IMR-90 (cell line): ENCODE measurements at regions of chr7 and their contacts with region 1.

Region 1: GRCh38 chr7:66542528-66543269 is 86.0 kb upstream of the KCTD7 start:
- DNase-seq: peak; percentile 48
- ATAC-seq: peak; percentile 77
- H3K4me3 ChIP-seq: no peak overlapping the region
- H3K27ac ChIP-seq: peak overlapping the region; percentile 6
- H3K4me1 ChIP-seq: peaks cover 4% of the 10 kb centered on the region; the same call in 1 of the 2 replicates
- H3K27me3 ChIP-seq: no peaks in the 10 kb centered on the region
- CTCF ChIP-seq: no peak
- POLR2A ChIP-seq: no peak
- RAD21 ChIP-seq: no peak

Region 2: GRCh38 chr7:64581926-64582894 is 1960.5 kb before region 1 on chr7:
- CTCF ChIA-PET with region 1: no interaction called
- POLR2A ChIA-PET with region 1: no interaction called
- dilution Hi-C with region 1: no loop called
- in situ Hi-C with region 1: no loop called
- intact Hi-C with region 1: no loop called
- DNase-seq: peak; percentile 58
- ATAC-seq: peak; percentile 54
- H3K4me3 ChIP-seq: no peak overlapping the region
- H3K27ac ChIP-seq: no peak overlapping the region
- H3K4me1 ChIP-seq: no peaks in the 10 kb centered on the region
- H3K27me3 ChIP-seq: no peaks in the 10 kb centered on the region
- CTCF ChIP-seq: no peak
- POLR2A ChIP-seq: no peak
- RAD21 ChIP-seq: no peak

Region 3: GRCh38 chr7:66099616-66100474 is 442.9 kb before region 1 on chr7:
- CTCF ChIA-PET with region 1: no interaction called
- POLR2A ChIA-PET with region 1: no interaction called
- dilution Hi-C with region 1: no loop called
- in situ Hi-C with region 1: no loop called
- intact Hi-C with region 1: no loop called
- DNase-seq: peak; percentile 89
- ATAC-seq: peak; percentile 94
- H3K4me3 ChIP-seq: peak overlapping the region; percentile 43
- H3K27ac ChIP-seq: peak overlapping the region; percentile 79
- H3K4me1 ChIP-seq: peaks cover 6% of the 10 kb centered on the region
- H3K27me3 ChIP-seq: no peaks in the 10 kb centered on the region
- CTCF ChIP-seq: no peak
- POLR2A ChIP-seq: no peak
- RAD21 ChIP-seq: no peak

Region 4: DNA sequence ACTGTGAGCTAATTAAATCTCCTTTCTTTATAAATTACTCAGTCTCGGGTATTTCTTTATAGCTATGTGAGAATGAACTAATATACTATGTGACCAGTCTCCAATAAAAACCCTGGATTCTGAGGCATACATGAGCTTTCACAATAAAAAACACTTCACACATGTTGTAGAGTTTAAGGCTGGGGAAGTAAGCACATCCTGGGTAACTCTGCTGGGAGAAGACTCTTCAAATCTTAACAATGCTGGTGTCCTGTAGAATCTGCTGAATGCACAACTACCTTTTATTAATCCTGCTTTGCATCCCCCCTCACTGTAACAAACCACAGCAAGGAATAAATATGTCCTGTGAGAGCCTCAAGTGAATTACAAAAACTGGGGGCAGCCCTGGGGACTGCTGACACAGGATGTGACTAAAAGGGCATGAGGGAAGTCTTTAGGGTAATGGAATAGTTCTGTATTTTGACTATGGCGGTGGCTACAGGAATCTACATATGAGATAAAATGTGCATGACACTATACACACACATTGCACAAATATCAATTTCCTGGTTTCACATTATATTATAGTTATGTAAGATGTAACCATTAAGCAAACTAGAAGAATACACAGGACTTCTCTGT is 40.9 kb after region 1 on chr7:
- CTCF ChIA-PET with region 1: no interaction called
- POLR2A ChIA-PET with region 1: interaction called, 15 read pairs
- dilution Hi-C with region 1: no loop called
- in situ Hi-C with region 1: no loop called
- intact Hi-C with region 1: no loop called
- DNase-seq: no peak
- ATAC-seq: no peak
- H3K4me3 ChIP-seq: no peak overlapping the region
- H3K27ac ChIP-seq: no peak overlapping the region
- H3K4me1 ChIP-seq: peaks cover 5% of the 10 kb centered on the region
- H3K27me3 ChIP-seq: no peaks in the 10 kb centered on the region
- CTCF ChIP-seq: no peak
- POLR2A ChIP-seq: no peak
- RAD21 ChIP-seq: no peak